CD4-positive, alpha-beta T cell (primary cell): ENCODE measurements at regions of chr1 and their contacts with region 1.

Region 1: GRCh38 chr1:110872745-110873720 is at the start of gene CD53:
- DNase-seq: peak in 12 of 14 experiments; percentile 24 to 90 (median 50)
- ATAC-seq: peak; percentile 69
- H3K4me3 ChIP-seq: peak within 1 kb of the TSS; percentile 66
- H3K4me3 Mint-ChIP-seq: peak within 1 kb of the TSS; percentile 91
- H3K27ac ChIP-seq: peak within 1 kb of the TSS; percentile 92 to 93
- H3K27ac Mint-ChIP-seq: peak within 1 kb of the TSS; percentile 92
- H3K4me1 ChIP-seq: peaks cover 32% of the 10 kb centered on the region
- H3K4me1 Mint-ChIP-seq: peaks cover 65% of the 10 kb centered on the region
- H3K27me3 ChIP-seq: no peaks in the 10 kb centered on the region
- H3K27me3 Mint-ChIP-seq: no peaks in the 10 kb centered on the region
- CTCF ChIP-seq: no peak
- total RNA-seq, gene CD53: 169 to 176 TPM

Region 2: GRCh38 chr1:110674337-110675059 is 198.5 kb before region 1 on chr1 and contains the start of gene KCNA3:
- CTCF ChIA-PET with region 1: no interaction called
- POLR2A ChIA-PET with region 1: interaction called, 8 read pairs
- intact Hi-C with region 1: loop called (anchors 5 to 10 kb)
- DNase-seq: peak; percentile 45 to 86 (median 65)
- ATAC-seq: peak; percentile 25
- H3K4me3 ChIP-seq: peak within 1 kb of the TSS; percentile 99
- H3K4me3 Mint-ChIP-seq: peak within 1 kb of the TSS; percentile 90
- H3K27ac ChIP-seq: peak within 1 kb of the TSS; percentile 93 to 95
- H3K27ac Mint-ChIP-seq: peak within 1 kb of the TSS; percentile 73
- H3K4me1 ChIP-seq: peaks cover 16% of the 10 kb centered on the region
- H3K4me1 Mint-ChIP-seq: peaks cover 59% of the 10 kb centered on the region
- H3K27me3 ChIP-seq: no peaks in the 10 kb centered on the region
- H3K27me3 Mint-ChIP-seq: no peaks in the 10 kb centered on the region
- CTCF ChIP-seq: peak; percentile 49
- total RNA-seq, gene KCNA3: 112 to 118 TPM

Region 3: GRCh38 chr1:110708974-110709440 is 164.0 kb before region 1 on chr1:
- CTCF ChIA-PET with region 1: no interaction called
- POLR2A ChIA-PET with region 1: no interaction called
- intact Hi-C with region 1: no loop called
- DNase-seq: no peak
- ATAC-seq: no peak
- H3K4me3 ChIP-seq: no peak overlapping the region
- H3K4me3 Mint-ChIP-seq: no peak overlapping the region
- H3K27ac ChIP-seq: no peak overlapping the region
- H3K27ac Mint-ChIP-seq: no peak overlapping the region
- H3K4me1 ChIP-seq: peaks cover 5% of the 10 kb centered on the region
- H3K4me1 Mint-ChIP-seq: peaks cover 26% of the 10 kb centered on the region
- H3K27me3 ChIP-seq: no peaks in the 10 kb centered on the region
- H3K27me3 Mint-ChIP-seq: no peaks in the 10 kb centered on the region
- CTCF ChIP-seq: no peak

Region 4: DNA sequence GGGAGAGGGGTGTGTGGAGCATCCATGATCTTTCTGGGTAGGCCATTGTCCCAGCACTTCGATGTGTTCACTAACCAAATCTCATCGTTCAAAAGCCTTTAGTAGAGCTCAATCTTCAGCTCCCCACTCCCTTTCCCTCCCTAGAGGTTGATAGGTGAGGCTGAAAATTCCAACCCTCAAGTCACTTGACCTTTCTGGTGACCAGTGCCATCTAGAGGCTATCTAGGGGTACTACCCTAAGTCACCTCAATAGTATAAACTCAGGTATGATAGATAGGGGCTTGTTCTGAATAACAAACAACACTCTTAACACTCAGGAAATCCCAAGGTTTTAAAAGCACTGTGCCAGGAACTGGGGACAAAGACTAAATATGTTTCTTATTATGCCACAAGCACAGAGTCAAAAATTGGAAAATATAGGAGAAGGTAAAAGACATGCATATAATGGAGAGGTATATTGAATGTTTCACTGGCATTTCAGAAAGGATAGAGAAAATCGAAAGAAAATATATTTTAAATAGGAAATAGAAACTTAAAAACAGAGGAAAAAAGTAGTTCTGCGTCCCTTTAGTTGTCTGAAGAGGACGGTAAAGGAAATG is 43.0 kb before region 1 on chr1:
- CTCF ChIA-PET with region 1: interaction called, 6 read pairs
- POLR2A ChIA-PET with region 1: interaction called, 3 read pairs
- intact Hi-C with region 1: loop called in 1 of 2 experiments (anchors 5 kb)
- DNase-seq: peak in 6 of 14 experiments; percentile 11 to 76 (median 52)
- ATAC-seq: peak; percentile 96
- H3K4me3 ChIP-seq: no peak overlapping the region
- H3K4me3 Mint-ChIP-seq: no peak overlapping the region
- H3K27ac ChIP-seq: no peak overlapping the region
- H3K27ac Mint-ChIP-seq: no peak overlapping the region
- H3K4me1 ChIP-seq: peaks cover 5% of the 10 kb centered on the region
- H3K4me1 Mint-ChIP-seq: peaks cover 21% of the 10 kb centered on the region
- H3K27me3 ChIP-seq: no peaks in the 10 kb centered on the region
- H3K27me3 Mint-ChIP-seq: no peaks in the 10 kb centered on the region
- CTCF ChIP-seq: peak; percentile 95

Region 5: GRCh38 chr1:110890474-110891196 is 17.6 kb after region 1 on chr1:
- CTCF ChIA-PET with region 1: interaction called, 4 read pairs
- POLR2A ChIA-PET with region 1: interaction called, 12 read pairs
- intact Hi-C with region 1: no loop called
- DNase-seq: no peak
- ATAC-seq: no peak
- H3K4me3 ChIP-seq: no peak overlapping the region
- H3K4me3 Mint-ChIP-seq: no peak overlapping the region
- H3K27ac ChIP-seq: no peak overlapping the region
- H3K27ac Mint-ChIP-seq: peak overlapping the region; percentile 92
- H3K4me1 ChIP-seq: peaks cover 80% of the 10 kb centered on the region
- H3K4me1 Mint-ChIP-seq: peaks cover 98% of the 10 kb centered on the region
- H3K27me3 ChIP-seq: no peaks in the 10 kb centered on the region
- H3K27me3 Mint-ChIP-seq: no peaks in the 10 kb centered on the region
- CTCF ChIP-seq: no peak

Region 6: GRCh38 chr1:110903853-110904484 is 30.9 kb after region 1 on chr1:
- CTCF ChIA-PET with region 1: no interaction called
- POLR2A ChIA-PET with region 1: interaction called, 48 read pairs
- intact Hi-C with region 1: no loop called
- DNase-seq: peak in 1 of 14 experiments; percentile 26
- ATAC-seq: peak; percentile 18
- H3K4me3 ChIP-seq: no peak overlapping the region
- H3K4me3 Mint-ChIP-seq: no peak overlapping the region
- H3K27ac ChIP-seq: no peak overlapping the region
- H3K27ac Mint-ChIP-seq: peak overlapping the region; percentile 19
- H3K4me1 ChIP-seq: peaks cover 6% of the 10 kb centered on the region
- H3K4me1 Mint-ChIP-seq: peaks cover 45% of the 10 kb centered on the region
- H3K27me3 ChIP-seq: no peaks in the 10 kb centered on the region
- H3K27me3 Mint-ChIP-seq: no peaks in the 10 kb centered on the region
- CTCF ChIP-seq: no peak

Region 7: DNA sequence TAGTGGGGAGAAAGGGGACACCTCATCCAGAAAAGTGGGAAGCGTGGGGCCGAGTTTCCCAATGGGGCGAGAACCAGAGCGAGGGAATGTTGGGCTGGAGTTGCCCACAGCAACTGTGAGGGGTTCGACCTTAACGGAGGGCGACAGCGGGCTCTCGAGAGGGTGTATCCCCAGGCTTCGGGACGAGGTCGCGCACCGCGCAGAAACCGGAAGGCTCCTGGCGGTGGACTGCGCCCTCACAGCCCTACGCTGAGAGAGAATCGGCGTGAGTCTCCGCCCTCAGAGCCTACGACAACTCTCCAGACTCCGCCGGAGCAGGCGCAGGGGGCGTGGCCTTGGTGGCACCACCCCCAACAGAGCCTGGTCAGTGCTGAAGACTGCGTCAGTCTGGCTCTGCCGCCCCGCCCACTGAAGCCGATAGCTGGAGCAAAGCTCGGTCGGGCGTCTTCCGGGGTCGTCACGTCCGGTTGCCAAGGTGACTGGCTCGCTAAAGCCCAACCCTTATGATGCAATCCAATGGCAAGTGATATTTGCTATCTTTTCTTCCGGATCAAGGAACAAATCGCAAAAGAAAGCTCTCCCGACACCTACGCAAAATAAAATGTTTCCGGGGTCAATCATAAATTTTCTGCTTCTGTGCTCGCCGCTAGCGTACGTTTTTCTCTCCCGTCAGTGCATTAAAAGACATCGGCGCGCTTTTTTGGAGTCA is 90.8 kb after region 1 on chr1 and contains the start of gene LRIF1:
- CTCF ChIA-PET with region 1: interaction called, 12 read pairs
- POLR2A ChIA-PET with region 1: interaction called, 70 read pairs
- intact Hi-C with region 1: loop called (anchors 1 to 2 kb)
- DNase-seq: peak; percentile 99 to 100 (median 100)
- ATAC-seq: peak; percentile 95
- H3K4me3 ChIP-seq: peak within 1 kb of the TSS; percentile 76
- H3K4me3 Mint-ChIP-seq: peak within 1 kb of the TSS; percentile 90
- H3K27ac ChIP-seq: peak within 1 kb of the TSS; percentile 94 to 100
- H3K27ac Mint-ChIP-seq: peak within 1 kb of the TSS; percentile 93
- H3K4me1 ChIP-seq: peaks cover 12% of the 10 kb centered on the region
- H3K4me1 Mint-ChIP-seq: peaks cover 36% of the 10 kb centered on the region
- H3K27me3 ChIP-seq: peaks cover 4 to 9% of the 10 kb centered on the region in 2 experiments
- H3K27me3 Mint-ChIP-seq: peaks cover 15% of the 10 kb centered on the region
- CTCF ChIP-seq: no peak
- total RNA-seq, gene LRIF1: 1.6 to 1.8 TPM

Region 8: DNA sequence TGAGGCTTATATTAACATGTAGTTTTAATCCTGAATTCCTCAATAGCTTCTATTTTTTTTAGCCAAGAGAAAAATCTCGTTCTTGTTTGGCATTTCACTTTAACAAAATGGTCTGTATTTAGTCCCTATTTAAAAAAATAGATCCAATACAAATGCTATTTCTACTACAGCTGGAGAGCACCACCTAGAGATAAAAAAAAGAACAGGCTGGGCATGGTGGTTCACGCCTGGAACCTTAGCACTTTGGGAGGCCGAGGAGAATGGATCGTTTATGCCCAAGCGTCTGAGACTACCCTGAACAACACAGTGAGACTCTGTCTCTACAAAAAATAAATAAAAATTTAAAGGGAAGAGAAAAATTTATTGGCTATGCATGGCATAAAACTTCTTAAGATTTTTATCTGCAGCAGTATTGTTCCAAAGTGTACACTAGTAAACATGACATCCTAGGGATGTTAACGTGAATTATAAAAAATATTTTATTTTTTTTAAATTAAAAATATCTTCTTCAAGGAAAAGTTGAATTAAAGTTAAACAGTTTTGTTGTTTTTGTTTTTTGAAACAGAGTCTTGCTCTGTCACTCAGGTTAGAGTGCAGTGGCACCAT is 1741.5 kb after region 1 on chr1:
- CTCF ChIA-PET with region 1: no interaction called
- POLR2A ChIA-PET with region 1: interaction called, 3 read pairs
- intact Hi-C with region 1: loop called in 1 of 2 experiments (anchors 5 kb)
- DNase-seq: peak in 4 of 14 experiments; percentile 25 to 63 (median 55)
- ATAC-seq: no peak
- H3K4me3 ChIP-seq: no peak overlapping the region
- H3K4me3 Mint-ChIP-seq: peak overlapping the region; percentile 75
- H3K27ac ChIP-seq: no peak overlapping the region
- H3K27ac Mint-ChIP-seq: peak overlapping the region; percentile 78
- H3K4me1 ChIP-seq: peaks cover 11% of the 10 kb centered on the region
- H3K4me1 Mint-ChIP-seq: peaks cover 25% of the 10 kb centered on the region
- H3K27me3 ChIP-seq: no peaks in the 10 kb centered on the region
- H3K27me3 Mint-ChIP-seq: no peaks in the 10 kb centered on the region
- CTCF ChIP-seq: peak; percentile 60